ENCODE measurements at regions of chr1 and their contacts with region 1.

Region 1: DNA sequence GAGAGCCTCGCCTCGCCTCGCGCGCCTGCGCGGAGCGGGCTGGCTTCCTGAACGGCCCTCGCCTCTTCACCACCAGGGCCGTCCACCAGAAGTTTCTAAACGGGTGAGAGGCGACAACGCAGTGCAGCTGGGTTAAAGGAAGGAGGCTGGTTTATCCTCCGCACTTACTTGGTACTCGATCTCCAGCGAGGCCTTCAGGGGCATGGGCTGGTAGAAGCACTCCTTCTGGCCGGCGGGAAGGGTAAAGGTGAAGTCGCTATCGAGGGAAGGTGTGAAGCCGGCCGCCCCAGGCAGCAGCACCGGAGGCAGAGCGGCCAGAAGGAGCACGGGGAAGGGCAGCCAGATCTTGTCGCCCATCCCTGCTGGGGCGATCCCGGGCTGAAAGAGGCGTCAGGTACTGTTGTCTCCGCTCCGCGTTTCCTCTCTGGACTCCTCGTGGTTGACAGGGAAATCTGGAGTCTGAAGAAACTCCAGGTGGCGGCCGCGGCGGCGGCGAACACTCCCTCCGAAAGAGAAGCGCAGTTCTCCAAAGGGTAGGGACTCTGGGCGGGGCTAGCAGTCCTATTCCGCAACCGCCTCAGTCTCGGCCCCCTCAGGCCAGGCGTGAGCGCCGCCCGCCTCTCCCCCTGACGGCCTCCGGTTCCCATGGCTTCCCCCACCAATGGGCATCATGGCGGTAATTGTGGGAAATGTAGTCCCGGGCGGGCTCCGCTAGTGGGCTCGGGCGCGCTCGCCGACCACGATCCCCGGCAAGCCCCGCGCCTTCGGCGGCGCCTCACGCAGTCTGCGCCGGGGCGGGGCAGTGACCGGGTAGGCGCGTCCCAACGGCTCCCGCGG is at the start of gene TMED5:
- DNase-seq: peak; percentile 97
- ATAC-seq: peak; percentile 85
- H3K4me3 ChIP-seq: peak within 1 kb of the TSS; percentile 81 to 98 (median 97)
- H3K4me3 Mint-ChIP-seq: peak within 1 kb of the TSS; percentile 90
- H3K27ac ChIP-seq: peak within 1 kb of the TSS; percentile 95 to 96
- H3K27ac Mint-ChIP-seq: peak within 1 kb of the TSS; percentile 93
- H3K4me1 ChIP-seq: peaks cover 27 to 35% of the 10 kb centered on the region in 2 donors
- H3K4me1 Mint-ChIP-seq: peaks cover 34% of the 10 kb centered on the region
- H3K27me3 ChIP-seq: no peaks in the 10 kb centered on the region
- H3K27me3 Mint-ChIP-seq: no peaks in the 10 kb centered on the region
- CTCF ChIP-seq: peak; percentile 24
- total RNA-seq, gene TMED5: 46.1 and 50.7 TPM in 2 replicates

Region 2: DNA sequence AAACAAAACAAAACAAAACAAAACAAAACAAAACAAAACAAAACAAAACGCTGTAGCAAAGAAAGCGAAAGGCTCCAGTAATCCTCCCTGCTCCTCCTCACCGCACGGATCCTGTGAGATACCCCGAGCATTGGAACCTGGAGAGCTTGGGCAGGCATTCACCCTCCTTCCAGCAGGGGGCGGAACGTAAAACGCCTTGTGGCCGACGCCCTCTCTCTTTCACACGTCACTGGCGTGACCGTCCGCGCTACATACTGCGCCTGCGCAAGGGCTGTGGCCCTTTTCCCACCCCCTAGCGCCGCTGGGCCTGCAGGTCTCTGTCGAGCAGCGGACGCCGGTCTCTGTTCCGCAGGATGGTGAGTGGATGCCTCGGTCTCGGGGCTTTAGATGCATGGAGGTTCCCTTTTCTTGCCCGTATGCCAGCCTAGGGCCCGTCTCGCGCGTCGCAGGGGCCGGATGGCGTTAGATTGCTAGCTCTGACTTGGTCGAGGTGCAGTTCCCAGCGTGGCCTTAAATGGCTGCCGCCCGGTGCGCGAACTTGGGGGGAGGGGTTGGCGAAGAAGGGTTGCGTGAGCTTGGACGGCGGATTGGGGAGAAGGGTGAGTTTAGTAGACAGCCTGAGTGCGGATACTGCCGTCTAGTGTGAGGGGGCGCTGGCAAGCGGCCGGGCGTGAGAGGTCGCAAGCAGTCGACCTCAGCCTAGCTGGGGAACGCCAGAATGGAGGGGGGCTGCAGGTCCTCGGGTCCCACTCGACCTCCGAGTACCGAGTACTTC is 348.2 kb before region 1 on chr1 and contains the start of gene RPL5:
- CTCF ChIA-PET with region 1: no interaction called
- POLR2A ChIA-PET with region 1: no interaction called
- intact Hi-C with region 1: loop called (anchors 1 kb)
- DNase-seq: peak; percentile 100
- ATAC-seq: peak; percentile 88
- H3K4me3 ChIP-seq: peak within 1 kb of the TSS; percentile 84 to 98 (median 92)
- H3K4me3 Mint-ChIP-seq: peak within 1 kb of the TSS; percentile 100
- H3K27ac ChIP-seq: peak within 1 kb of the TSS; percentile 90 to 96
- H3K27ac Mint-ChIP-seq: peak within 1 kb of the TSS; percentile 100
- H3K4me1 ChIP-seq: peaks cover 25 to 28% of the 10 kb centered on the region in 2 donors
- H3K4me1 Mint-ChIP-seq: peaks cover 47% of the 10 kb centered on the region
- H3K27me3 ChIP-seq: no peaks in the 10 kb centered on the region
- H3K27me3 Mint-ChIP-seq: no peaks in the 10 kb centered on the region
- CTCF ChIP-seq: peak; percentile 89
- total RNA-seq, gene RPL5: 1,049 and 1,104 TPM in 2 replicates

Region 3: DNA sequence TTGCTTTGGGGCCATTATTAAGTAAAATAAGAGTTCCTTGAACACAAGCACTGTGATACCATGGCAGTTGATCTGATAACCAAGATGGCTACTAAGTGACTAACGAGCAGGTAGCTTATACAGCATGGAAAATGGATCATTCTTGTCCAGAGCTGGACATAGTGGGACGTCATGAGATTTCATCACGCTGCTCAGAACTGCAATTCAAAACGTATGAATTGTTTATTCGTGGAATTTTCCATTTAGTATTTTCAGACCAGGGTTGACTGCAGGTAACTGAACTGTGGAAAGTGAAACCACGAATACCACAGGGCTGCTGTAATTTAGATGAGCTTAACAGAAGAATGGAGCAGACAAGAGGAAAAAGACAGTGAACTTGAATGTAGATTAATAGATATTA is 39.3 kb after region 1 on chr1:
- CTCF ChIA-PET with region 1: no interaction called
- POLR2A ChIA-PET with region 1: no interaction called
- intact Hi-C with region 1: loop called (anchors 2 kb)
- DNase-seq: peak; percentile 30
- ATAC-seq: peak; percentile 57
- H3K4me3 ChIP-seq: peak overlapping the region; percentile 30 to 65 (median 46)
- H3K4me3 Mint-ChIP-seq: peak overlapping the region; percentile 82
- H3K27ac ChIP-seq: peak overlapping the region; percentile 25 to 47
- H3K27ac Mint-ChIP-seq: peak overlapping the region; percentile 64
- H3K4me1 ChIP-seq: peaks cover 4 to 13% of the 10 kb centered on the region in 2 donors
- H3K4me1 Mint-ChIP-seq: peaks cover 23% of the 10 kb centered on the region
- H3K27me3 ChIP-seq: no peaks in the 10 kb centered on the region
- H3K27me3 Mint-ChIP-seq: no peaks in the 10 kb centered on the region
- CTCF ChIP-seq: no peak

Region 4: GRCh38 chr1:93447516-93448291 is 267.6 kb after region 1 on chr1 and contains the start of gene FNBP1L:
- CTCF ChIA-PET with region 1: no interaction called
- POLR2A ChIA-PET with region 1: no interaction called
- intact Hi-C with region 1: loop called (anchors 5 kb)
- DNase-seq: peak; percentile 71
- ATAC-seq: peak; percentile 85
- H3K4me3 ChIP-seq: peak within 1 kb of the TSS; percentile 43 to 92 (median 80)
- H3K4me3 Mint-ChIP-seq: peak within 1 kb of the TSS; percentile 98
- H3K27ac ChIP-seq: peak within 1 kb of the TSS in 1 of 2 donors; percentile 64
- H3K27ac Mint-ChIP-seq: peak within 1 kb of the TSS; percentile 83
- H3K4me1 ChIP-seq: peaks cover 18 to 20% of the 10 kb centered on the region in 2 donors
- H3K4me1 Mint-ChIP-seq: peaks cover 27% of the 10 kb centered on the region
- H3K27me3 ChIP-seq: peaks cover 0 to 7% (median 3%) of the 10 kb centered on the region in 4 experiments
- H3K27me3 Mint-ChIP-seq: peaks cover 23% of the 10 kb centered on the region
- CTCF ChIP-seq: no peak
- total RNA-seq, gene FNBP1L: 5.4 and 5.7 TPM in 2 replicates

Region 5: DNA sequence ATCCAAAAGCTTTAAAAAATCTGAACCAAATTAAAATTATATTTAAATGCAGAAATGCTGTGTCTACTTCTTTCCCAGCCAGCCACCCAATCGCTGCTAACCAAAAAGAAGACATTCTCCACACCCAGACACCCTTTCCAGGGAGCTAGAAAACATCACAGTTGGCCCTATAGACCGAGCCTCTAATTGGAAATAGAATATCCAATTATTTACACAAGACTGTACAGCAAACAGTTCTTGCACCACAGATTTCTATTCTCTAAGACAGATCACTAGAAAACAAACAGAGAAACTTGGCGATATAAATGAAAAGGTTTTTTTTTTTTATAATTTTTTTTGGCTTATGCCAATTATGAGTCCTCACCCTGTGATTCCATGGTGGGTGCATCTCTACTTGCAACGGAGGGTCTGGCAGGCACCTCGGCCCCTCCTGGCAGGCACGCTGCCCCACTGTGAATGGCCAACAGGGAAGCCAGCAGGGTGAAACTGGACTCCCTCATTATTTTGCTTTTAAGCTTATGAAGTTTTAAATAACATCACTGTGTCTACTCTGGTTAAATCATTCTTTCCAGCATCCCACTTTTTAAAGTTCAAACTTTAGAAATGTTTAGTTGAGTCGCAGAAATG is 472.3 kb after region 1 on chr1:
- CTCF ChIA-PET with region 1: no interaction called
- POLR2A ChIA-PET with region 1: no interaction called
- intact Hi-C with region 1: no loop called
- DNase-seq: no peak
- ATAC-seq: no peak
- H3K4me3 ChIP-seq: no peak overlapping the region
- H3K4me3 Mint-ChIP-seq: no peak overlapping the region
- H3K27ac ChIP-seq: no peak overlapping the region
- H3K27ac Mint-ChIP-seq: no peak overlapping the region
- H3K4me1 ChIP-seq: no peaks in the 10 kb centered on the region
- H3K4me1 Mint-ChIP-seq: no peaks in the 10 kb centered on the region
- H3K27me3 ChIP-seq: no peaks in the 10 kb centered on the region
- H3K27me3 Mint-ChIP-seq: no peaks in the 10 kb centered on the region
- CTCF ChIP-seq: no peak

Region 6: DNA sequence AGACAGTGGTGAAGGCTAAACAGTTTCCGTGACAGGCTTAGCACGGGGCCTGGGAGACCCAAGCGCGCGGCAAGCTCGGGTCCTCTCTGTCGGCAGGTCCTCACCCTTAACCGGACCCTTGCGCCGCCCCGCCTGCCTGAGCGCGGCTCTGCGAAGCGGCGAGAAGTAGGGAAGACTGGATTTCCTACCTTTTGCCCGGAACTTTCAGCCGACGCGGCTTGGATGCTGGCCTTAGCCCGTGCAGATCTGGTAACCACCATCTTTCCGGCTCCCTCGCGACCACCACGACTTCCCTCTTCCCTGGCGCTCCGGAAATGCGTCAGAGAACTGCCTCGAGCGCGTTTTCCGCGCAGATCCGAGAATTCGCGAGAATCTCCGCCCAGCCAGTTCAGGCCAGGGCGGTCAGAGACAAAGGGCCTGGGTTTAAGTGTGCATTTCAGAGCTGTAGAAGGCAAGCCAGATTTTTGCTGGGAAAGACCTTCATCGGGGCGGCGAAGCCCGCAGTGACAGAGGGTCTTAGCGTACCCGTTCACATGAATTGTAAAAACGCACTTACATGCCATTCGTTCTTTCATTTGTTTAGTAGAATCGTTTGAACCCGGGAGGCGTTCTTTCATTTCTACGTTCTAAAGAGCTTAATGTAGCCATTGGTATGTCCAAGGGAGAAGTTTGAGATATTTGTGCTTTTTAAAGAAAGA is 698.9 kb after region 1 on chr1 and contains the start of gene DNTTIP2:
- CTCF ChIA-PET with region 1: no interaction called
- POLR2A ChIA-PET with region 1: no interaction called
- intact Hi-C with region 1: loop called (anchors 10 kb)
- DNase-seq: peak; percentile 91
- ATAC-seq: peak; percentile 89
- H3K4me3 ChIP-seq: peak within 1 kb of the TSS; percentile 82 to 99 (median 96)
- H3K4me3 Mint-ChIP-seq: peak within 1 kb of the TSS; percentile 98
- H3K27ac ChIP-seq: peak within 1 kb of the TSS; percentile 89 to 94
- H3K27ac Mint-ChIP-seq: peak within 1 kb of the TSS; percentile 100
- H3K4me1 ChIP-seq: peaks cover 26 to 30% of the 10 kb centered on the region in 2 donors
- H3K4me1 Mint-ChIP-seq: peaks cover 42% of the 10 kb centered on the region
- H3K27me3 ChIP-seq: no peaks in the 10 kb centered on the region
- H3K27me3 Mint-ChIP-seq: no peaks in the 10 kb centered on the region
- CTCF ChIP-seq: no peak
- total RNA-seq, gene DNTTIP2: 58.3 and 62.1 TPM in 2 replicates

Region 7: DNA sequence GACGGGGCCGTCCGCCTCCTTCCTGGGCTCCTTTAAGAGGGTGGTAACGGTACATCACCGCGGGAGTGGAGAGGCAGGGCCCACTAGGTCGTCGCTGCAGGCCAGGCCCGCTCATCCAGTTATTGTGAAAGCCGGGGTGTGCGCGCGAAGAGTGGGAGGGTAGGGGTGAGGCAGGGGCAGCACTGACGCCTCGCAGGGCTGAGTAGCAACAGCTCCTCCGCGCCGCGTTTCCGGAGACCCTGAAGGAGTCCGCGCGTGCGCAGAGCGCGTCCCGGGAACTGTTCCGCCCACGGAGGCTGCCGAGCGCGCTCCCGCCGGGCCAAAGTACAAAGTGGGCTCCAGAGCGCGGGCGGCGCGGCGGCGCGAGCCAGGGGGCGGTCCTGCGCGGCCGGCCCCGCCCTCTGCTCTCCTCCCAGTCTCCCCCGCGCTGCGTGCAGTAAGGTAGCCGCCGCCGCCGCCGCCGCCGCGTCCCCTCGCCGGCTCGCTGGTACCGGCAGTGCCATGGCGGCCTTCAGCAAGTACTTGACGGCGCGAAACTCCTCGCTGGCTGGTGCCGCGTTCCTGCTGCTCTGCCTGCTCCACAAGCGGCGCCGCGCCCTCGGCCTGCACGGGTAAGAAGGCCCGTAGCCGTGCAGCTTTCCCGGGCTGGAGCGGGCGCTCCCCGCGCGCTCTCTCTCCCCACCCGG is 1238.0 kb after region 1 on chr1 and contains the start of gene ABCD3:
- CTCF ChIA-PET with region 1: no interaction called
- POLR2A ChIA-PET with region 1: no interaction called
- intact Hi-C with region 1: loop called (anchors 5 kb)
- DNase-seq: peak; percentile 98
- ATAC-seq: peak; percentile 95
- H3K4me3 ChIP-seq: peak within 1 kb of the TSS; percentile 67 to 89 (median 85)
- H3K4me3 Mint-ChIP-seq: no peak within 1 kb of the TSS
- H3K27ac ChIP-seq: peak within 1 kb of the TSS; percentile 73 to 80
- H3K27ac Mint-ChIP-seq: peak within 1 kb of the TSS; percentile 77
- H3K4me1 ChIP-seq: peaks cover 12 to 15% of the 10 kb centered on the region in 2 donors
- H3K4me1 Mint-ChIP-seq: peaks cover 22% of the 10 kb centered on the region
- H3K27me3 ChIP-seq: peaks cover 0 to 5% (median 2%) of the 10 kb centered on the region in 4 experiments
- H3K27me3 Mint-ChIP-seq: peaks cover 7% of the 10 kb centered on the region
- CTCF ChIP-seq: no peak
- total RNA-seq, gene ABCD3: 19.4 and 21.0 TPM in 2 replicates